ENCODE measurements at regions of chr3 and their contacts with region 1.

Region 1: GRCh38 chr3:76683256-76683655 is 356.6 kb upstream of the ROBO2 start:
- DNase-seq: no peak
- H3K4me3 ChIP-seq: no peak overlapping the region
- H3K27ac ChIP-seq: no peak overlapping the region
- H3K4me1 ChIP-seq: no peaks in the 10 kb centered on the region
- H3K27me3 ChIP-seq: no peaks in the 10 kb centered on the region
- CTCF ChIP-seq: no peak
- EP300 ChIP-seq: no peak
- POLR2A ChIP-seq: no peak

Region 2: GRCh38 chr3:76668653-76669052 is 14.6 kb before region 1 on chr3:
- intact Hi-C with region 1: loop called (anchors 2 kb)
- DNase-seq: no peak
- H3K4me3 ChIP-seq: no peak overlapping the region
- H3K27ac ChIP-seq: no peak overlapping the region
- H3K4me1 ChIP-seq: no peaks in the 10 kb centered on the region
- H3K27me3 ChIP-seq: no peaks in the 10 kb centered on the region
- CTCF ChIP-seq: no peak
- EP300 ChIP-seq: no peak
- POLR2A ChIP-seq: no peak

Region 3: DNA sequence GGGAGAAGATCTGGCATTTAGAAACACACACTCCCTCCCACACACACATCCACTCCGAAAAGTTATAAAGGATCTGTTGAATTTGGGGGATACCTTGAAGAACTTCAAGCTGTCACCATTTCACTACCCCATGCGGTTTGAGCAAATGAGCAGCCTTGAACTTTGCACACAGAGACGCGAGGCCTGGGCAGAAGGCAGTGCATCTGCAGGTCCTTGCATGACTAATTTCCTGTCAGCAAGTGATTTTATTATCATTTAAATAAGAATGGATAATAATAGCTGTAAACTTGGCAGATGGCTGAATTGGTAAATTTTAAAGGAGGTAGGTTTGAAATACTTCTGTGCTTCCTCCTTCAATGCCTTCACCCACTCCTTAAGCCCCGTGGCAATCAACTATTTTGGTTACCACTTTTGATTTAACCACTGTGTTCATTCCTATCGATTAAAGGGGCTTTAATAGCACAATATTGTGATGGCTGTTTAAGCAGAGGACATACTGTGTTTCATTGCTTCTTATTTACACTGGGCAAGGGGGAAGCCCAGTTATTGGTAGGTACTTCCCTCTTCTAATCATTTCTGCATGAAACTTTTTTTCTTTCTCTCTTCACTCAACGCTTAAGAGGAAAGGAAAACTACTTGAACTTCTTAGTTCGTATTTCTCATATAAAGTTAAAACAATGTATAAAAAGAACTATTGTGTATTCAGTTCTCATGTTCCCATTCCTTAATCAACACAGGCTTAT is 464.8 kb after region 1 on chr3:
- intact Hi-C with region 1: no loop called
- DNase-seq: no peak
- H3K4me3 ChIP-seq: no peak overlapping the region
- H3K27ac ChIP-seq: no peak overlapping the region
- H3K4me1 ChIP-seq: no peaks in the 10 kb centered on the region
- H3K27me3 ChIP-seq: no peaks in the 10 kb centered on the region
- CTCF ChIP-seq: no peak
- EP300 ChIP-seq: no peak
- POLR2A ChIP-seq: no peak

Measured in sigmoid colon (tissue), 7 donors.